ENCODE measurements at regions of chr4 and their contacts with region 1.

Region 1: GRCh38 chr4:109803924-109804571 is 2.2 kb upstream of the CFI start:
- DNase-seq: no peak

Region 2: DNA sequence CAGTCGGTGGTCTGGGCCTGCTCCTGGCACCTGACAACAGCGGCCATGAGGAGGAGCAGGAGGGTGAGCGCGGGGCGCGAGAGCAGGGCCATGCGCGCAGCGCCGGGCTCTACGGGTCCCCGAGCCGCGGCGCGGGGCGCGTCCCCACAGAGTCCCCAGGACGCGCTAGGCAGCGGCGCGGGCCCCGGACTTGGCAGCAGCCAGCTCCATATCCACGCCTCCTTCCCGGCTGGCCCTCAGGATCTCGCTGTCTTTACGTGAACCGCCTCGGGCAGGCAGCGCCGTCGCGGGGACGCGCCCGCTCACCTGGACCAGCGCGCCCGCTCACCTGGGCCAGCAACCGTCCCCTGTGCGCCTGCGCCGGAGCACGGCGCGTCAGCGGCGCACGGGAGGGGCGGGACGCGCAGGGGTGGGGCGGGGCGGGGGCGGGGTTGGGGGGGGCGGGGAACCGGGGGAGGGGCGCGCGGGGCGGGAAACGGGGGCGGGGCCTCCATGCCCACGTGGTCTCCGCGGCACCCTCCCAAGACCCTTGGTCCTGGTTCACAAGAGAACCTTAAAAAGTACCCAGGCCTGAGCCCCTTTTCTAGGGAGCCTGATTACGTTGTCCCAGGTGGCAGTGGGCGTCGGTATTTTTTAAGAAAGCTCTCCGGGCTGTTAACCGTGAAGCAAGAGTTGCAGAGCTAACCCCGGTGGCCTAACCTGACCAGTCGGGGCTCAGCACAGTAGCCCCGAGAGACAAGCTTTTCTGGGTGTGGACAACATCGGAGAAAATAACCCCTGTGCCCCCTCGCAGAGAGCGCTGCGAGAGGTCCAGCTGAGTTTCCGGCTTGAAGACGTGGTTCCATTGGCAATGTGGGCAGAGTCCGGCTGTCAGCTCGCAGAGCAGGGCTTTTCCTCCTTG is 74.1 kb before region 1 on chr4 and contains the start of gene PLA2G12A:
- intact Hi-C with region 1: loop called (anchors 5 kb)
- DNase-seq: peak; percentile 84
- total RNA-seq, gene PLA2G12A: 37.7 TPM